GM18951 (cell line): ENCODE measurements at regions of chr9 and their contacts with region 1.

Region 1: DNA sequence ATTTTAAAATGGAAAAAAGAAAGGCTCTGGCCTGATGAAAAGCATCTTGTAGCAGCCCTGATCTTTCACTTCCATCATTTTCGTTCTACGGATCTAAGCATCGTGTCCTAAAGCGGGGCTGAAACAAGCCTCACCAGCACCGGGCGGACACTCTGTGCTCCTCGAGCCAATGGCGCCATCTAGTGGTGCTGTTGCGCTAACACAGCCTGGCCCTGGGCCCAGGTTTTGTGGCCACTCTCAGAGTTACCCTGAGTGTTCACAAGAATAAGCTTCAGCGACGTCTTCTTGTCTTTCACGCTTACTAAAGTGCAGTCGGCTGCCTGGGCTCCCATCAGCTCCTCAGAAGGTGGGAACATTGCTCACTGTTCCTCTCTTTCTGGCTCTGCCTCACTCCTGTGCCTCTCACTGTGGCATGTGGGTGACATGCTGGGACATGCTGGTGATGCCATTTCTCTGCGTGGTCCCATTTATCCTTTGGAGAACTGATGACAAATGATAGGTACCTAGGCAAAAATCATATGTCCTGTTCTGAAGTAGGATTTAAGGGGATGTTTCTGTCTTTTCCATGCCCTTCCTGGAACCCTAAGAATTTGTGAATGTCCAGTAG is 32.7 kb downstream of the DMRT3 start:
- POLR2A ChIP-seq: no peak

Region 2: DNA sequence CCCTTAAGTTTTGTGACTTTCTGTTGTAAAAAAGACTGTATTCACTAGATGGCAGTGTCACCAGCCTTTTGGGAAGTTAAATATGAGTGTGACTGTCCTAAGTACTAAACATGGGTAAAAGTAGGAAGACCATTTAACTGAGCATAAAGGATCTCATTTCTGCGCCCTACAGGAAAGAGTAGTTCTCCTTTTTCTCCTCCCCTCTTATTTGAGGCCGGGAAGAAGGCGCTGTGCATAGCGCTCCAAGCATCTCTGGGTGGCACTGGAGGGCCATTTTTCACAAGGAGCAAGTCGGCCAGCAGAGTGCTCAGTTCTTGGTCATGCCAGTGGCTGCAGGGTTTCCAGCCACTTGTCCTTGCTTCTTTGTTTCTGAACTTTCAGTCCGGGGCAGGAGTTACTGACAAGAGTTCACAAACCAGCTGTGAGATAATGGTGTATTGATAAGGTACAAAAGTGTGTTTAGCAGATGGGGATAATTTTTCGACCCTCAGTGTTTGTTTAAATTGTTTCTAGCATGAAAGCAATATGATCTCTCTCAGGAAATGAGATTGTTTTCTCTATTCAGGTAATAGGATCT is 395.3 kb before region 1 on chr9:
- in situ Hi-C with region 1: loop called (anchors 10 kb)
- POLR2A ChIP-seq: no peak

Region 3: GRCh38 chr9:893843-894420 is 115.3 kb before region 1 on chr9:
- in situ Hi-C with region 1: loop called (anchors 5 kb)
- POLR2A ChIP-seq: no peak

Region 4: DNA sequence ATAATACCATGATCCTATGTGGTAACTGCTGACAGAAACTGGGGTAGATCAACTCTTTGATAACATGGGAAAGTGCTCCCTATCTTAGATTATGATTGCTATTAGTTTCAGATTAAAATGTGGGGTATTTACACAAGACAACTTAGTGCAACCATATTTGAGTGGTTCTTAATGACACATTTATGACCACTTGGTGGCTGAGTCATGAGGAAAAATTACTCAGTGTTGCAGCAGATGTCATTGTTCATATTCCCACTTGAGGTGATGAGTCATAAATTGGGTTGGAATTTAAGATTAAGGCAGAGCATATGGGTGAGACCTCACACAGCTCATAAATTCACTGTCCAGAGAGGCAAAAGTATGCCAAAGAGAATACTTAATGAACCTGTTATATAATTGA is 449.3 kb after region 1 on chr9:
- in situ Hi-C with region 1: no loop called
- POLR2A ChIP-seq: no peak